OCI-LY7 (cell line): ENCODE measurements at regions of chr20 and their contacts with region 1.

Region 1: GRCh38 chr20:45910670-45911485 is 1.1 kb downstream of the PLTP start:
- DNase-seq: peak; percentile 100
- H3K4me3 ChIP-seq: peak overlapping the region; percentile 42
- H3K27ac ChIP-seq: no peak overlapping the region
- H3K4me1 ChIP-seq: peaks cover 14% of the 10 kb centered on the region
- CTCF ChIP-seq: no peak

Region 2: DNA sequence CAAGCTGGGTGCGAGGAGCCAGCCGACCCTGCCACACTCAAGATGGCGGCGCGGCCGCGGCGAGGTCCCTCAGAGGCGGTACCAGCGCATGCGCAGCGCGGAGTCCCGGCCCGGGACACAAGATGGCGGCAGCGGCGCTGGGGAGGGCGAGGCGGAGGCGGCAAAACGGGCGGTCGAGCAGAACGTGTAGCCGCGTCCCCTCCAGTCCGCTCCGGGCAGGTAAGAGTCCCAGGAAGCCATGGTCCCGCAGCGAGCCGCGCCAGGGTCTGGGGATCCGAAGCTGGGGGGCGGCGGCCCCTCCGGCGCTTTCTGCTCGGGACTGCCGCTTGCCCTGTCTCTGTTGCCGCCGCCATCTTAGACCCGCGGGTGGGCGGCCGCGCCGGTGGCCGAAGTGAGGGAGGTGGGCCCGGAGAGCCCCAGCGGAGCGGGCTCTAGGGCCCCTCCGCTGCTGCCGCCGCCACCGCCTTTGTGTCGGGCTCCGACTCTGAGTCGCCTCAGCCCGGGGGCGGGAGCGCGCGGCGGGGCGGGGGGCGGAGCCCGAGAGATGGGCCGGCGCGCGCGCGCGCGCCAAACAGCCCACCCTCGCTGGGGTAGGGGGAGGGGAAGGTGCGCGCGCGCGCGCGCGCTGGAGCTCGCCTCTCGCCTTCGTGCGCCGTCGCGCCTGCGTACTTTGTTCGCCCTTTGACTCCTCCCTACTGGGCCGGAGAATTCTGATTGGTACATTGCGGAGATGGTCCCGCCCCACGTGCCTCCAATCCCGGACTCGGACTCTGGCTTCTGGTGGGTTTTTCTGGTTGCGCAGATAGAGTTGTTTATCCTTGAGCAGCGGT is 23.9 kb after region 1 on chr20 and contains the start of gene PCIF1:
- CTCF ChIA-PET with region 1: no interaction called
- POLR2A ChIA-PET with region 1: no interaction called
- intact Hi-C with region 1: loop called (anchors 2 kb)
- DNase-seq: peak; percentile 98
- H3K4me3 ChIP-seq: peak within 1 kb of the TSS; percentile 87
- H3K27ac ChIP-seq: peak within 1 kb of the TSS; percentile 75
- H3K4me1 ChIP-seq: peaks cover 8% of the 10 kb centered on the region
- CTCF ChIP-seq: no peak
- total RNA-seq, gene PCIF1: 16.7 and 21.2 TPM in 2 replicates

Region 3: GRCh38 chr20:45946149-45946970 is 35.5 kb after region 1 on chr20:
- CTCF ChIA-PET with region 1: no interaction called
- POLR2A ChIA-PET with region 1: no interaction called
- intact Hi-C with region 1: no loop called
- DNase-seq: no peak
- H3K4me3 ChIP-seq: no peak overlapping the region
- H3K27ac ChIP-seq: no peak overlapping the region
- H3K4me1 ChIP-seq: peaks cover 3% of the 10 kb centered on the region
- CTCF ChIP-seq: no peak

Region 4: DNA sequence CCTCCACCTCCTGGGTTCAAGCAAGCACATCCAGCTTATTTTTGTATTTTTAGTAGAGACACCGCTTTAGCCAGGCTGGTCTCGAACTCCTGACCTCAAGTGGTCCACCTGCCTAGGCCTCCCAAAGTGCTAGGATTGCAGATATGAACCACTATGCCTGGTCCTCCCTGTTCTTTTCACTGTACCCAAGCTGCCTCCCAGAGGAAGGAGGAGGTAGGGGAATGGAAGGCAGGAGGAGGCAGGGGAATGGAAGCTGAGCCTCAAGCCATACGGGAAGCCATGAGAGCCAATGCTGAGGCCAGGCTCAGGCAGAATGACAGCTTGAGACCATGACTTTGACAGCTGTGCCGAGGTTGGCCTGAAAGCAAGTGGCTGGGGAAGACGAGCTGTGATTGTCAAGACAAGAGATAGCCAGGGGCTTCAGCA is 74.7 kb after region 1 on chr20:
- CTCF ChIA-PET with region 1: no interaction called
- POLR2A ChIA-PET with region 1: no interaction called
- intact Hi-C with region 1: no loop called
- DNase-seq: no peak
- H3K4me3 ChIP-seq: no peak overlapping the region
- H3K27ac ChIP-seq: no peak overlapping the region
- H3K4me1 ChIP-seq: no peaks in the 10 kb centered on the region
- CTCF ChIP-seq: no peak